ENCODE measurements at regions of chr3 and their contacts with region 1.

Region 1: DNA sequence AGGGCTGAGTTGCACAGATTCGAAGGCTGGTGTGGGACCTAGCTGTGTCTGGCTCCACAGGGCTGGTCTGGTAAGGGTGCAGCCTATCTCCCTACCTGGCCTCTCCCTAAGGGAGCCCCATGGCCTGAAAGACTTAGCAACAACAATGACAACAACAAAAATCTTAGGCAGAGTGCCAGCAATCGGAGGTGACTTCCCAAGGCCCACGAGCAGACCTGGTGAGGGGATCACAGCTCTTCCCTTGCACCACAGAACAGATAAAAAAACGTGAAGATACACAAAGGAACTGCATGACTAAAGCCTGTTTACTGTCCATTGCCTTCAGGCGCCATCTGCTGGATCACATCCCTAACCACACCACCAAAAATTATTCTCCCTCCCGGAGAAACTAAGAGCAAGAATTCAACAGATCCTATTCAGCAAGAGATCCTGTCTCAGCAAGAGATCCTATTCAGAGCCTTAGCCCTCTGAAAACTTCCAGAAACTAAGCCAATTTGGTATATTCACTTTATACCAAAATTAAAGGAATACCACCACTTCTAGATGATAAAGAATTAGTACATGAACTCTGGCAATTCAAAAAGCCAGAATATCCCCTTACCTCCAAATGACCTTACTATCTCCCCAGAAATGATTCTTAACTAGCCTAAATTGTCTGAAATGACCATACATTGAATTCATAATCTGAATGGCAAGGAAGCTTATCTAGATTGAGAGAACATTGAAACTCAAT is 24.1 kb upstream of the OR5K4 start:
- DNase-seq: no peak
- H3K4me3 ChIP-seq: no peak overlapping the region
- H3K27ac ChIP-seq: no peak overlapping the region
- H3K4me1 ChIP-seq: no peaks in the 10 kb centered on the region
- H3K27me3 ChIP-seq: peaks cover 0 to 11% (median 0%) of the 10 kb centered on the region in 4 donors
- CTCF ChIP-seq: peak in 2 of 3 experiments; percentile 36 to 50
- EP300 ChIP-seq: no peak
- POLR2A ChIP-seq: no peak

Region 2: GRCh38 chr3:98039322-98040024 is 290.1 kb before region 1 on chr3:
- intact Hi-C with region 1: loop called (anchors 2 kb)
- DNase-seq: no peak
- H3K4me3 ChIP-seq: peak overlapping the region; percentile 35 to 55 (median 40)
- H3K27ac ChIP-seq: no peak overlapping the region
- H3K4me1 ChIP-seq: peaks cover 0 to 4% (median 0%) of the 10 kb centered on the region in 4 donors
- H3K27me3 ChIP-seq: peaks cover 0 to 18% (median 0%) of the 10 kb centered on the region in 4 donors
- CTCF ChIP-seq: peak; percentile 75 to 92 (median 81)
- EP300 ChIP-seq: no peak
- POLR2A ChIP-seq: no peak

Region 3: DNA sequence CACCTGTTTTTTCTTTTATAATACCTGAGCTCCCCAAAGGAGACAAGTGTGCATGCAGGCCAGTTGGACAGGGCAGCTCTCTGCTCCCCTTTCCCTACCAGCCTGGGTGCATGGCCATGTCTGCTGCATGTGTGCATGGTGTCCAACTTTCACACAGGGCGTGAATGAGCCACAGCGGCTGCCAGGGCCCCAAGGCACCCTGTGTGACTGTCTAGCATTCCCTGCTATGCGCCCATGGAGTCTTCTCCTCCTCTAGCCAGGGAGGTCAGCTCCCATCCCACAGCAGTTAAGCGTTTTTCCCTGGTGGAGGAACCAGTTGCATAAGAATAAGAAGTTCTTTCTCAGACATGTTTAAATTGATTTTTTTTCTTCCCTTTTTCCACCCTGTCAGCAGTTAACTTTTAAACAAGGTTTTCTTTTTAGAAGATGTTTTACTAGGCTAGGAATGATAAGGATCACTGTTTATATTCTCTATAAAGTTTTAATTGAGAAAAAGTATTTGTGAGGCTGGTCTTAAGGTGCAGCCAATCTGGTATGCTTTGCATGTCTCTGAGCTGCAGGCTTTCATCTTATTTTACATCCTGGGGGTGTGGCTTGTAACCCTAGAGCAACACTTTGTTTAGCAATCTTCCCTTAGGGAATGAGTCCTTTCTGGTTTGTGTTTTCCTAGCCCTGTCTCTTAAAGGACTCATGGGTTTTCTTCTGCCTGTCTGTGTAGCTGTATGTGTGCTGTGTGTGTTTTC is 219.6 kb before region 1 on chr3:
- intact Hi-C with region 1: no loop called
- DNase-seq: no peak
- H3K4me3 ChIP-seq: no peak overlapping the region
- H3K27ac ChIP-seq: no peak overlapping the region
- H3K4me1 ChIP-seq: no peaks in the 10 kb centered on the region
- H3K27me3 ChIP-seq: no peaks in the 10 kb centered on the region
- CTCF ChIP-seq: no peak
- EP300 ChIP-seq: no peak
- POLR2A ChIP-seq: no peak

Measured in esophagus muscularis mucosa (tissue), 4 donors.